Activated CD4-positive, alpha-beta T cell treated with anti-CD3 and anti-CD28 coated beads, Interleukin-2, amount 10 ng/mL, durations not matched to agents 7 days and 5 days (primary cell): ENCODE measurements at regions of chr17 and their contacts with region 1.

Region 1: GRCh38 chr17:36193216-36193775 is 3.3 kb downstream of the CCL3L1 start:
- DNase-seq: no peak
- H3K4me3 Mint-ChIP-seq: no peak overlapping the region
- H3K27ac Mint-ChIP-seq: no peak overlapping the region
- H3K4me1 Mint-ChIP-seq: peaks cover 10% of the 10 kb centered on the region
- H3K27me3 Mint-ChIP-seq: peaks cover 15% of the 10 kb centered on the region

Region 2: GRCh38 chr17:36183001-36183971 is 10.0 kb before region 1 on chr17:
- CTCF ChIA-PET with region 1: interaction called, 10 read pairs
- POLR2A ChIA-PET with region 1: no interaction called
- DNase-seq: no peak
- H3K4me3 Mint-ChIP-seq: no peak overlapping the region
- H3K27ac Mint-ChIP-seq: no peak overlapping the region
- H3K4me1 Mint-ChIP-seq: no peaks in the 10 kb centered on the region
- H3K27me3 Mint-ChIP-seq: peaks cover 15% of the 10 kb centered on the region